ENCODE measurements at regions of chr2 and their contacts with region 1.

Region 1: DNA sequence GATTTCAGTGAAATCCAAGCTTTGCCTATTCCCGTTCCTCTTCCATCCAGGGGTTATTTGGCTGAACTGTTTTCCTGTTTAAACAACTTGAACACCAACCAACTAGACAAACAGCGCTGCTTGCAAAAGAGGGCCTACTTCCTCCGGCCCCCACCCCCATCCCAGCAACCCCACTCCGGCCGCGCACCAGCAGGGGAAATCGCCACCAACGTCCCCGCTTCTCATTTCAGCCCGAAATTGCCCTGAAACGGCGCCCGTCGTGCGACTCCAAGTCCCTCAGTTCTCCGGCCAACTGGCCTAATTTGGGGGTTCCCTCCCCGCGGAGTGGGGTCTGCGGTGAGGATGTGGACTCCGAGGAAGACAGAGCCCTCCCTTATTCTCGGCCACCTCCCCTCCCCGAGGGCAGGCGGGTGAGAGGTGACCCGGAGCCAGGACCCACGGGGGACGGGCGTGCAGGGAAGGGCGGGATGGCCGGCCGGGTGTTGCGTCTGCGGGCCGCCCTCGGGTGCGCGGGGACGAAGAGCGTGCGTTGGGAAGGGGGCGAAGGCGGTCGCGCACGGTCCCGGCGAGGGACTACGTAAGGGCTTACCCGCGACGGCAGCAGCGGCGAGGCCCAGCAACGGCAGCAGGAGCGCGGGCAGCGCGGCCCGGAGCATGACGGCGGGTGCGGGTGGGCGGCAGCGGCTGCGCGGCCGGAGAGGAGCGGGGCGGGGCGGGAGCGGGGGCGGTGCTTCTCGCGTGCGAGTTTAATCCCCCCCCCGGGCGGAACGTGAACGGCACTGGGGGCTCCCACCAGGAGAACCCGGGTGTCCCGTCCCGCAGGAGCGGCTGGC is at the start of gene CD302:
- DNase-seq: peak; percentile 85
- total RNA-seq, gene CD302: 10.8 TPM

Region 2: DNA sequence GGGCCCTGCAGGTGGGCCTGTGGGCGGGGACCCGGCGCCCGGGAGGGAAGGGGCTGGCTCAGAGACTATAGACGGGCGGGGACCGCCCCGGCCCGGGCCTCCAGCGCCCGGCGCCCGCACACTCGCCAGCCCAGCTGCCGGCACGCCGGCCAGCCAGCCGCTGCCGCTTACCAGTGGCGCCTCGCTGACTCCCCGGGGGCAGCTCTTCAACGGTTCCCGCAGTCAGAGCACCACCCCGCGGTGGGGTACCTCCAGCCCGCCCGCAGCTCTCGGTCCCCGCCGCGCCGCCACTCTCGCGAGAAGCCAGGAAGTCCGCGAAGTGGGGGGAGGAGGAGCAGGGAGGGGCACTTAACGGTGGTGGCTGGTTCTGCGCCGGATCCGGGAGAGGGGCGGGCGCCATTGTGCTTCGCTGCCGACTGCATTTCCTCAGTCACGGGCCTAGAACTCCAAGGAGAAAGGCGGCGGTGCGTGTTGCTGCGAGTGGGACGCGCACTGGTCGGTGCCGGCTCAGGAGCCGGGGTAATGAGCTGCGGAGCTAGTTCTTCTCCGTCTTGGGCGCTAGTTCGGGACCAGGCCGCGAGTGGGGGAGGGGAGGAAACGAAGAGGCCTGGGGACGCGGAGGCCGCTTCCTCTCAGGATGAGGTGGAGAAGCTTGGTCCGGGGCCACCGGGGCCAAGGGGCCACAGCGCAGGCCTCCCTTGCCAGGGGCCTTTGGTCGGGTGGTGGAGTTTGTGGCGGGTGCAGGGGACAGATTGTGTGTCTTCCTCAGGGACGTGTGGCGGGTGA is 85.4 kb before region 1 on chr2 and contains the start of gene MARCHF7:
- intact Hi-C with region 1: loop called (anchors 5 kb)
- DNase-seq: peak; percentile 98
- total RNA-seq, gene MARCHF7: 86.5 TPM

Measured in cardiac septum (tissue), 1 donor.